ENCODE measurements at regions of chr20 and their contacts with region 1.

Region 1: DNA sequence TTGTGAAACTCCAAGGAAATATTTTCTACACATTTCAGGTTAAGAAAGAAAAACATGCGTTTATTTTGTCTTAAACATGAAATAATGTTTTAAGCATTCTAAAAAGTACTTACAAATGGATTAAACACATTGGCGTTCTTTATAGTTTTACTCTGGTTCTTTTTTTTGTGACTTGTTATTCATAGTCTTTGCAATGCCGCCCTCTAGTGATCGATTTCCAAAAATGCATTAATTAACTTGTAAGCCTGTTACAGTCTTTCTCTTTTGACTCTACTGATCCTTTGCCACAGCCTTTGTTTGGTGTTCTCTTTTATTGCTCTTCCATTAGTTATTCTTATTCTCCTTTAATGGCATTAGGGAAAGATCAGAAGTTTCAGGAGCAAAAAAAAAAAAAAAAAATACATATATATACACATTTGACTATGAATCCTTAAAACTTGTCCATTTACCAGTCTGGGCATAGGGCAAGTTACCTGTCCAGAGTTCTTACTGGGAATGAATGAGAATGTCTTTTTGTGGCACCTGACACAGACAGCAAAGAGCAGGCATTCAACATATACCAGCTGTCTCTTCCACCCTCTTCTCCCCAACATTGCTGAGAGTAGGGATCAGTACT is 59.9 kb downstream of the MACROD2 start:
- DNase-seq: no peak
- H3K4me3 ChIP-seq: no peak overlapping the region
- H3K27ac ChIP-seq: no peak overlapping the region
- H3K4me1 ChIP-seq: no peaks in the 10 kb centered on the region
- H3K27me3 ChIP-seq: no peaks in the 10 kb centered on the region
- CTCF ChIP-seq: peak; percentile 9 to 70 (median 52)
- POLR2A ChIP-seq: no peak

Region 2: GRCh38 chr20:13819885-13820645 is 235.2 kb before region 1 on chr20:
- intact Hi-C with region 1: loop called (anchors 5 kb)
- DNase-seq: peak; percentile 54 to 71
- H3K4me3 ChIP-seq: no peak overlapping the region
- H3K27ac ChIP-seq: peak overlapping the region in 2 of 3 donors; percentile 1 to 25
- H3K4me1 ChIP-seq: no peaks in the 10 kb centered on the region
- H3K27me3 ChIP-seq: no peaks in the 10 kb centered on the region
- CTCF ChIP-seq: peak; percentile 48 to 74 (median 72)
- POLR2A ChIP-seq: no peak